Right cardiac atrium (tissue), 5 donors: ENCODE measurements at regions of chr18 and their contacts with region 1.

Region 1: GRCh38 chr18:32815881-32816280 is 43.1 kb upstream of the KLHL14 start:
- DNase-seq: no peak
- ATAC-seq: no peak
- H3K4me3 ChIP-seq: no peak overlapping the region
- H3K27ac ChIP-seq: no peak overlapping the region
- H3K4me1 ChIP-seq: no peaks in the 10 kb centered on the region
- H3K27me3 ChIP-seq: no peaks in the 10 kb centered on the region

Region 2: DNA sequence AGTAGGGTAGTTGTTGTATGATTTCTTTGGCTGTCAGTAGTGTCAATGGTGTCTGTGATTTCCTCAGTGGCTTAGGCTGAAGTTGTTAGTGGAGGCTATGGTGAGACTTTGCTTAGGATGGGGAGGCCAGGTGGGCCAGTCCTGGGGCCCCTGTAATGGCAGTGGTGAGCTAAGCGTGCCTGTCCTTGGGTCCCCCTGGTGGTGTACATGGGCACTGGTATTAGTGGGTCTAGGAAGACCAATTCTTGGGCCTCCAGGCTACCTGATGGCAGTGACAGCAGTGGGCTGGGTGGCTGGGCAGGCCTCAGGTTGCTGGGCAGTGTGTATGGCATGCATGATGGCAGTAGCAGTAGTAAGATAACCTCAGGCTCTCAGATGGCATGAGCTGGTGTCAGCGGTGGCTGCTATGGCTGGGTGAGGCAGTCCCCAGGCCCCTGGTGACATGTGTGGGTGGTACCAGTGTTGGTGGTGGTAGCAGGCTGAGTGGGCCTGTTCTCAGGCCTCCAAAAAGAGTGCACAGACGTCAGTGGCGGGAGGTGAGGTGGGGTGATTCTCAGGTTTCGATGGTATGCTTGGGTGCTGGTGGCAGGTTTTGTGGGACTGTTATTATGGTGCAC is 146.2 kb before region 1 on chr18:
- intact Hi-C with region 1: no loop called
- DNase-seq: peak in 1 of 3 donors; percentile 35
- ATAC-seq: peak in 1 of 2 donors; percentile 16
- H3K4me3 ChIP-seq: no peak overlapping the region
- H3K27ac ChIP-seq: no peak overlapping the region
- H3K4me1 ChIP-seq: no peaks in the 10 kb centered on the region
- H3K27me3 ChIP-seq: no peaks in the 10 kb centered on the region

Region 3: DNA sequence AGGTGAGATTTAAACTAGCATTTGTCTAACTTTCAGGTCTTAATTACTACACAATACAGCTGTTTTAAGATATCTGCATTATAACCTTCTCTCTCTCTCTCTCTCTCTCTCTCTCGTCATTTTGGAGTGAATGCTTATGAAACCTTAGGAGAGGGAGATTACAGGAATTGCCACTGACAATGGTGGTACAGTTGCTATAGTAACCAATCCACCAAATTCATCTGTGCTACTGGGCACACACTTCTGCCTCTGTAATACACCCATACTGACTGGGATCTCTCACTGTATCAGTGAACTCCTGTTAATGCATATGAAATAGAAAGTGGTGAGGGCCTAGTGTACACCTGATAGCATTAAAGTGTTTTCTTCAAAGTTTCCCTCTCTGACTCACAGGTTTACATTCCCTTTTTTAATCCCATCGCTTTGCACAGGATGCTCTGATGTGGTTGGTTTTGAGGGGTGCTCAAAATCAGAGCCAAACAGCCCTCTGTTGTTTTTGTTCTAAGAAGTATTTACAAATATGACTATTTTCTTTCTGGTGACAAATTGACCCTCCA is 56.2 kb before region 1 on chr18:
- intact Hi-C with region 1: loop called in 1 of 4 experiments (anchors 10 kb)
- DNase-seq: no peak
- ATAC-seq: no peak
- H3K4me3 ChIP-seq: no peak overlapping the region
- H3K27ac ChIP-seq: no peak overlapping the region
- H3K4me1 ChIP-seq: no peaks in the 10 kb centered on the region
- H3K27me3 ChIP-seq: no peaks in the 10 kb centered on the region